ENCODE measurements at regions of chr1 and their contacts with region 1.

Region 1: DNA sequence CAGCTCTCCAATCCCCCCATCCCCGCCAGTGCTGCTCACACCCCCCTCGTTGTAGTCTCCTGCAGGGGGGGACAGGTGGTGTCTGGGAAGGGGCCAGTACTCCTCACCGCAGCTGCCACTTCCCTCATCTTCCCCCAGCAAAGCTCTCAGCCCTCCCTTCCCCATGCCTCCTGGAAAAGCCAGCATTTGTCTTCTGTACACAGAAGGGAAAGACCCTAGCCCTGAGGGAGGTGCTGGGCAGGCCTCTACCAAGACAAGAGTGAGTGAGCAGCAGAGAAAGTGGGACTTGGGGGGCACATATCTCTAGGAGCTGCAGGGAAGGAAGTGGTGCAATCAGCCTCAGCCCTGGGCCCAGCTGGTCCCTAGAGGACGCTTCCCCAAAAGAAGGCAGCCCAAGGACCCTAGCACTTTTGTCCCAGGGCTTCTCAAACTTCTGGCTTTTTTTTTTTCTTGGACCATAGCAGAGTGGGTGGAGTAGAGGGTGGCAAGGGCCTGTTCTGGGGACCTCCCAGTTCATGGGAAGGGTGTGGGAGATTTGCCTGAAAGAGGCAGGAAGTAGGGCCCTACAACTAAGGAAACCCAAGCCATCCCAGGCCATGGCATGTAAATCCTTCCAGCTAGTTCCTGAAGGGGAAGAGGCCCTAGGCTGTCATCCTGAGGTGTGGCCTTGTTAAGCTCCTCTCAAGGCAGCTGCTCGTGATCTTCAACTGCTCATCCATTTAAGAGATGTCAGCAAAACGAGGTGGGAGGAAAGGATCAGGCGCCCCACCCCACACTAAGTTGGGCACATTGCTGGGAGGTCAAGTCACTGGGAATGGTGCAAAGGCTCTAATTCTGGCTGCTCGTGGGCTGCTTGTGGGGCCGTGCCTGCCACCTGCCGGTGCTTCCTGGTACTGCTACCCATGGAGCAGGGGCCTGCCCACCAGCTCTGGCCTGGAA is 12.6 kb downstream of the ZC3H12A start:
- DNase-seq: peak; percentile 85 to 89 (median 87)
- ATAC-seq: peak; percentile 89
- H3K4me3 ChIP-seq: no peak overlapping the region
- H3K27ac ChIP-seq: no peak overlapping the region
- H3K4me1 ChIP-seq: peaks cover 3 to 12% of the 10 kb centered on the region in 2 experiments; a peak in 3 of 5 replicates
- H3K27me3 ChIP-seq: no peaks in the 10 kb centered on the region
- CTCF ChIP-seq: peak; percentile 93 to 99 (median 97)
- EP300 ChIP-seq: no peak
- POLR2A ChIP-seq: peak; percentile 58
- RAD21 ChIP-seq: peak; percentile 85 to 96

Region 2: DNA sequence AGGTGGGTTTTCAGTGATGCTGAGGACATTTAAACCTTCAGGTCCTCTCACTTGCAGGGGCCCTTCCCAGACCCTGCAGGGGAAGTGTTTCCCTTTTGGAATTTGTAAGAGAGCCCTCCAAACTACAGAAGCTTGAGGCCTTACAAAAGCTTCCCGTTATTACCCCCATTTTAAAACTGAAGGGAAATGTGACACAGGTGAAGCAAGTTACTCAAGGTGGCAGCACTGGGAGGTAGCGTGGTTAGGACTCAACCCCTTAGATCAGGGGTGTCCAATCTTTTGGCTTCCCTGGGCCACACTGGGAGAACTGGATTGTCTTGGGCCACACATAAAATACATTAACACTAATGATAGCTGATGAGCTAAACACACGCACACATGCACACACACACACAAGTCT is 28.4 kb before region 1 on chr1:
- CTCF ChIA-PET with region 1: interaction called, 69 read pairs
- POLR2A ChIA-PET with region 1: interaction called, 5 read pairs
- in situ Hi-C with region 1: no loop called
- intact Hi-C with region 1: loop called (anchors 1 kb)
- DNase-seq: peak in 1 of 4 experiments; percentile 34
- ATAC-seq: peak; percentile 42
- H3K4me3 ChIP-seq: no peak overlapping the region
- H3K27ac ChIP-seq: no peak overlapping the region
- H3K4me1 ChIP-seq: peaks cover 5 to 7% of the 10 kb centered on the region in 2 experiments; a peak in 4 of 5 replicates
- H3K27me3 ChIP-seq: peaks cover 5 to 16% of the 10 kb centered on the region in 2 experiments; a peak in 4 of 5 replicates
- CTCF ChIP-seq: peak; percentile 23 to 51 (median 43); a peak in 5 of 6 replicates
- EP300 ChIP-seq: no peak
- POLR2A ChIP-seq: no peak
- RAD21 ChIP-seq: peak in 1 of 2 experiments; percentile 47; a peak in 2 of 4 replicates

Region 3: GRCh38 chr1:37474046-37474759 is 12.7 kb before region 1 on chr1 and contains the start of gene ZC3H12A:
- CTCF ChIA-PET with region 1: no interaction called
- POLR2A ChIA-PET with region 1: interaction called, 118 read pairs
- in situ Hi-C with region 1: no loop called
- intact Hi-C with region 1: no loop called
- DNase-seq: peak; percentile 96 to 99 (median 99)
- ATAC-seq: peak; percentile 87
- H3K4me3 ChIP-seq: peak within 1 kb of the TSS; percentile 77
- H3K27ac ChIP-seq: peak within 1 kb of the TSS; percentile 94
- H3K4me1 ChIP-seq: peaks cover 52 to 62% of the 10 kb centered on the region in 2 experiments
- H3K27me3 ChIP-seq: 0 out of 5 replicates have a peak, but pooled peaks cover 0 to 3% of the 10 kb centered on the region in 2 experiments
- CTCF ChIP-seq: no peak
- EP300 ChIP-seq: 0 out of 2 replicates have a peak, but pooled peaks have one; percentile 9
- POLR2A ChIP-seq: peak; percentile 83
- RAD21 ChIP-seq: no peak
- polyA plus RNA-seq, gene ZC3H12A: 0.14 to 0.22 TPM

Region 4: DNA sequence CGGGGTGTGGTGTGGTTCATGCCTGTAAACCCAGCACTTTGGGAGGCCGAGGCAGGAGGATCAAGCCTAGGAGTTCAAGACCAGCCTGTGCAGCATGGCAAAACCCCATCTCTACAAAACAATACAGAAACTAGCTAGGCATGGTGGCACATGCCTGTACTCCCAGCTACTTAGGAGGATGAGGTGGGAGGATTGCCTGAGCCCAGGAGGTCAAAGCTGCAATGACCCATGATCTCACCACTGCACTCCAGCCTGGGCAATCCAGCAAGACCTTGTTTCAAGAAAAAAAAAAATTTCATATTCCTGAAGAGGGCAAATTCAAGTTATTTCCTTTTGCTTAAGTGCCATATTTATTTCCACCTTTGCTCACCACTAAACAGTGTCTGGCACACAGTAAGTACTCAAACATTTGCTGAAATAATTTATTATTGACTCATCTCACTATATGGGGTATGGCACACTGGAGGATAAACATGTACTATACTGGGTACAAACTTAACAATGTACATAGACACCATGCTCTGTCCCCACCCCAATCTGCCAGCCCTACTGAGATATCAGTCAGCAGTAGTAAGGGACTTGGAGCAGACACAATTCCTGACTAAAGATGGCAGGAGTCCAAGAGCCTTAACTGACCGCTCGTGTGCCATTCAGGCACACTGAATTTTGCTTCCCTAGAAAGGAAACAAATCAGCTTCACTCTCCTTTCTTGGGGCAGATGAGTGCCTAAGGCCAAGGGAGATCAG is 12.1 kb after region 1 on chr1:
- CTCF ChIA-PET with region 1: no interaction called
- POLR2A ChIA-PET with region 1: interaction called, 65 read pairs
- in situ Hi-C with region 1: no loop called
- intact Hi-C with region 1: no loop called
- DNase-seq: peak in 2 of 4 experiments; percentile 11 to 31
- ATAC-seq: peak; percentile 32
- H3K4me3 ChIP-seq: no peak overlapping the region
- H3K27ac ChIP-seq: no peak overlapping the region
- H3K4me1 ChIP-seq: peaks cover 0 to 4% of the 10 kb centered on the region in 2 experiments; a peak in 1 of 5 replicates
- H3K27me3 ChIP-seq: no peaks in the 10 kb centered on the region
- CTCF ChIP-seq: no peak
- EP300 ChIP-seq: no peak
- POLR2A ChIP-seq: no peak
- RAD21 ChIP-seq: no peak